Astrocyte of the cerebellum (primary cell): ENCODE measurements at regions of chr3 and their contacts with region 1.

Region 1: GRCh38 chr3:27758083-27758482 is 36.0 kb upstream of the EOMES start:
- DNase-seq: peak; percentile 3
- H3K4me3 ChIP-seq: no peak overlapping the region
- CTCF ChIP-seq: no peak

Region 2: DNA sequence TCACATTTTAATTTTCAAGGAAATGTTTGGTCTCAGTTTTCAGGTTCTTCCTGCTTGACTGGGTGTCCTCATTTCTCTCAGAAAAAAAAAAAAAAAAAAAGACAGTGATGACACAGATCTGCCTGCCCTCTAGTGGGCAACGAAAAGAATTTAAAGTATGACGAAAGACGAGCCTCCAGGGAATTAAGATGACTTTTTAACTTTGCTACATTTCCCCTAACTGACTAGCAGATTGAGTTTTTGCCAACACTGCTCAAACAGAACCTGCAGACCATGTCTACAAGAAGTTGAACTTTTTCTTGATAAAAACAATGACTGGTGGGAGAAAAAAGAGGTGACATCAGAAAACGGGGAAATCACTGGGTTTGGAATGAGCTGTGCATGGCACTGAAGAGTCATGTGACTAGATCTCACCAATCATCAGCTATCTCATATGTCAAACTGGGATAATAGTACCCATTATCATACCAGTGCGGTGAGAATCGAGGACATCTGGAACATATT is 76.8 kb before region 1 on chr3:
- in situ Hi-C with region 1: no loop called
- DNase-seq: peak; percentile 70
- H3K4me3 ChIP-seq: no peak overlapping the region
- CTCF ChIP-seq: peak; percentile 58

Region 3: GRCh38 chr3:27800261-27800660 is 42.2 kb after region 1 on chr3:
- in situ Hi-C with region 1: loop called (anchors 5 kb)
- DNase-seq: no peak
- H3K4me3 ChIP-seq: no peak overlapping the region
- CTCF ChIP-seq: no peak

Region 4: DNA sequence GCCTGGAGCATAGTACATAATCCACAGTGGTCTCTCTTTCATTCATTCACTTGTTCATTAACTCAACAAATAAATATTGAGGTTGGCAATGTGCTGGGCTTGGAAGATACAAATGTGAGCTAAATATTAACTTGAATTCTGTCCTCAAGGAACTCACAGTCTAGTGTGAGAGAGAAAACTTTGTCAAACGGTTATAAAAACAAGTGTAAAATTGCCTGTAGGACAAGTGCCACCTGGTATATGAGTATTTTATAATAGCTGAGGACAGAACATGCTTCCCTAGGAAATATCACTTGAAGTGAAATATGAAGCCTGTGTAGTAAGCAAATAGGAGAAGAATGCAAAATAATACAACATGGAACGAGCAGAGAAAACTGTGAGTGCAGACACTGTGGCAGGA is 310.3 kb after region 1 on chr3:
- in situ Hi-C with region 1: no loop called
- DNase-seq: no peak
- H3K4me3 ChIP-seq: no peak overlapping the region
- CTCF ChIP-seq: no peak